WTC11 (cell line): ENCODE measurements at regions of chr5 and their contacts with region 1.

Region 1: DNA sequence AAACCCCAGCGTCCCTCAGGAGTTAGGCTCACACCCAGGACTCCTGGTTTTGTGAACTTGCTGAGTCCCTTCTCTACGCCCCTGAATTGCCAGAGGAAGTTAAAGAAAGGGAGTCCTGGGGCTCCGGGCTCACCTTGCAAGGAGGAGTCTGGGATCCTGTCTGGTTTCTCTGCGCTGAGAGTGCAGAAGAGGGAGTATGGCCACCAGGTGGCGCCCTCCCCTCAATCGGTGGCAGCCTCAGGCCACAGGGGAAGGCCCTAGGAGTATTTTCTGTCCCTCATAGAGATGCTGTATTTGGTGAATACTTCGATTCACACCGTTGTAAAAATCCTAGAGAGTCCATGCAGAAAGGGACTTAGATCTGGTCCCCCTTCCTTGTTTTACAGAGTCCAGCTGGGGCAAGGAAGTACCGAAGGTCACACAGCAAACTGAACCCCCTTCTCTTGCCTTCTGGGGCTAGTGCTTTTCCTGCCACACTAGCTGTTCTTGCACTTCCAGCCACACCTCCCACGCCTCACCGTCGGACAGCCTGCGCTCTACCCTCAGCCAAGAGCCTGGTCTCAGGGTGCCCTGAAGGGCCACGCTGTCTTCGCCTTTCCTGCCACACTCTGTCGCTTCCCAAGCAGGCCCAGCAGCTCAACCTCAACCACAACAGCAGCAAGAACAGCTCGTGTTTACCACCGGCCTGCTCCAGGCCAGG is 10.2 kb downstream of the HAND1 start:
- DNase-seq: peak; percentile 90
- ATAC-seq: peak; percentile 96
- H3K4me3 Mint-ChIP-seq: 0 out of 2 replicates have a peak overlapping the region, but pooled peaks have one; percentile 9
- H3K27ac Mint-ChIP-seq: no peak overlapping the region
- H3K4me1 Mint-ChIP-seq: peaks cover 17% of the 10 kb centered on the region
- H3K27me3 Mint-ChIP-seq: peaks cover 70% of the 10 kb centered on the region
- CTCF ChIP-seq: peak; percentile 90

Region 2: GRCh38 chr5:154287136-154287535 is 180.7 kb before region 1 on chr5:
- CTCF ChIA-PET with region 1: no interaction called
- POLR2A ChIA-PET with region 1: no interaction called
- DNase-seq: peak; percentile 41
- ATAC-seq: peak; percentile 84
- H3K4me3 Mint-ChIP-seq: no peak overlapping the region
- H3K27ac Mint-ChIP-seq: peak overlapping the region; percentile 90
- H3K4me1 Mint-ChIP-seq: peaks cover 37% of the 10 kb centered on the region
- H3K27me3 Mint-ChIP-seq: no peaks in the 10 kb centered on the region
- CTCF ChIP-seq: no peak

Region 3: DNA sequence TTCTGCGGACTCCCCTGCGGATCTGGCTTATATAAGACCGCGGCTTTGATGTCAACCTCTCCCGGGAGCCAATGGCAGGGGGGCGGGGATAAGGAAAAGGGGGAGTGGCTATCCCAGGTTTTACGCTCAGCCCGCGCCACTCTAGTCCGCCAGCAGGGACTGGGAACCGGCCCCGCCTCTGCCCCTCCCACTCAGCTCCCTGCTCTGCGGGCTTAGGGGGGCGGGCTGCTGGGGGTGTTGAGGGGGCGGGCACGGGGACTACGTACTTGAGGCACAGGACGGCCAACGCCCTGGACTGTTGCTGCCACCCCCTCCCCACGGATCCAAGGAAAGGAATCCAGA is 10.4 kb after region 1 on chr5 and contains the start of gene HAND1:
- CTCF ChIA-PET with region 1: interaction called, 26 read pairs
- POLR2A ChIA-PET with region 1: no interaction called
- DNase-seq: peak; percentile 92
- ATAC-seq: peak; percentile 65
- H3K4me3 Mint-ChIP-seq: peak within 1 kb of the TSS; percentile 63
- H3K27ac Mint-ChIP-seq: no peak within 1 kb of the TSS
- H3K4me1 Mint-ChIP-seq: peaks cover 72% of the 10 kb centered on the region
- H3K27me3 Mint-ChIP-seq: peaks cover 100% of the 10 kb centered on the region
- CTCF ChIP-seq: no peak
- total RNA-seq, gene HAND1: not detected in 3 replicates

Region 4: DNA sequence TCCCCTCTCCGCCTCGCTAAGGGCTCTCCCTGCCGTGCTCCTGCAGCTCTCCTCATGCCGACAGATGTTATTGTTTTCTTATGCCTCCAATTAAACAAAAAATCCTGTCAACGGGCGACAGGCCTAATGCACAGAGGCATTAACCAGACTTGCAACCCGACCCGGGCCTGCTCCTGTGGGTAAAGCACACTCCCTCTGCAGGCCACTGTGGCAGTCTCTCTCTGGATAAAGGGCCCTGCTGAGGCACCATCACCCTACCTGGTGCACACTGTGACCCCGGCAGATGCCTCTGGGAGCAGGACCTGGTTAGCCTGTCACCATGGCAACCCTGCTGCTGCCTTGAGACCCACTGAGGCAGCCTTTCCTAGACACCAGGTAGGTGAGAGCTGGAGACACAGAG is 37.8 kb after region 1 on chr5:
- CTCF ChIA-PET with region 1: interaction called, 10 read pairs
- POLR2A ChIA-PET with region 1: no interaction called
- DNase-seq: peak; percentile 36
- ATAC-seq: peak; percentile 72
- H3K4me3 Mint-ChIP-seq: no peak overlapping the region
- H3K27ac Mint-ChIP-seq: no peak overlapping the region
- H3K4me1 Mint-ChIP-seq: peaks cover 24% of the 10 kb centered on the region
- H3K27me3 Mint-ChIP-seq: peaks cover 3% of the 10 kb centered on the region
- CTCF ChIP-seq: no peak

Region 5: DNA sequence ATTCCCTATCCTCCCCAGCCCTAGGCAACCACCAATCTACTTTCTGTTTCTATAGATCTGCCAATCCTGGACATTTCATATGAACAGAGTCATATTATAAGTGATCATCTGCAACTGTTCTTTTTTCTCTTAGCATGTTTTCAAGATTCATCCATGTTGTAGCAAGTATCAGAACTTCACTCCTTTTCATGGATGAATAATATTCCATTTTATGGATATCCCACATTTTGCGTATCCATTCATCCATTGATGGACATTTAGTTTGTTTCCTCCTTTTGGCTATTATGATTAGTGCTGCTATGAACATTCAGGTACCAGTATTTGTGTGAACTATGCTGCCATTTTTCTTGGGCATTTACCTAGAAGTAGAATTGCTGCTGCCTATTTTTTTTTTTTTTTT is 61.5 kb after region 1 on chr5:
- CTCF ChIA-PET with region 1: no interaction called
- POLR2A ChIA-PET with region 1: no interaction called
- DNase-seq: no peak
- ATAC-seq: no peak
- H3K4me3 Mint-ChIP-seq: no peak overlapping the region
- H3K27ac Mint-ChIP-seq: no peak overlapping the region
- H3K4me1 Mint-ChIP-seq: no peaks in the 10 kb centered on the region
- H3K27me3 Mint-ChIP-seq: peaks cover 3% of the 10 kb centered on the region
- CTCF ChIP-seq: no peak

Region 6: GRCh38 chr5:154610321-154611154 is 142.7 kb after region 1 on chr5:
- CTCF ChIA-PET with region 1: interaction called, 91 read pairs
- POLR2A ChIA-PET with region 1: no interaction called
- DNase-seq: peak; percentile 94
- ATAC-seq: peak; percentile 87
- H3K4me3 Mint-ChIP-seq: peak overlapping the region; percentile 65
- H3K27ac Mint-ChIP-seq: no peak overlapping the region
- H3K4me1 Mint-ChIP-seq: peaks cover 29% of the 10 kb centered on the region
- H3K27me3 Mint-ChIP-seq: peaks cover 79% of the 10 kb centered on the region
- CTCF ChIP-seq: peak; percentile 91